ENCODE measurements at regions of chr1 and their contacts with region 1.

Region 1: DNA sequence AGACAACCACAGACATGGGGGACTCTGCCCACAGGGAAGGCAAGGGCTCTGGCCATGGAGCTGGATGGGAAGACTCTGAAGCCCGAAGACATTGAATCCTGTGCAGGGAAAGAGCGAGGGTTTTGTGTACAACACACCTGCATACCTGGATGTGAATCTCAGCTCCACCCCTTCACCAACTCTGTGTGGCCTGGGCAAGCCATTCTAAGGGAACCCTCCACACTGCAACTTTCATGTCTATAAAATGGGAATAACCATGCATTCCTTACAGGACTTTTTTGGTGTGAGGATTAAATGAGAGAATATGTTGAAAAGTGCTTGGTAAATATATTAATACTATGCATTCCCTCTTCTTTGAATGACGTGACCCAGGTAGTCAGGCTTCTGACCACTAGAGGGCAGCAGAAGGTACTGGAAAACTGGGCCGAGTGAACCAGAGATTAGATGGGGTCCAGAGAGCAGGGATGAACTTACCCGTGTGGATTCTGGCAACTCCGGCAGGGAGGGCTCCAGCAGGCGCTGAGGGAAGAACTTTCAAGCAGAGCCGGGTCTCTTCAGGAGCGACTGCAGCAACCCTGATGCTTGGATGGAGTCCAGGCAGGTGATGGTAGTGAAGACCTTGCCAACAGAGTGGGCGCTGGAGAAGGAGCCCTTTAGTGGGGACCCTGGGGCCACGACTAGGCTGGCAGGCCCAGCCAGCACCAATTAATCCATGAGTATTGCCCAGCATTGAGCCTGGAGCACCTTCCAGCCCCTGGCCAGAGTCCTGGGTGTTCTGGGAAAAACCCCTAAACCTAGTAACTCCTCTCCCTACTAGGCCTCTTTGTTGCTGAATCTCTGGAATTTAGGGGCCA is 834 bp upstream of the ELF3 start:
- DNase-seq: peak; percentile 90
- H3K4me3 ChIP-seq: peak overlapping the region in 1 of 2 donors; percentile 52
- H3K27ac ChIP-seq: peak overlapping the region; percentile 91
- H3K4me1 ChIP-seq: peaks cover 13% of the 10 kb centered on the region
- H3K27me3 ChIP-seq: no peaks in the 10 kb centered on the region
- CTCF ChIP-seq: peak; percentile 79 to 96 (median 96)
- POLR2A ChIP-seq: no peak

Region 2: GRCh38 chr1:201933840-201934430 is 75.6 kb before region 1 on chr1:
- intact Hi-C with region 1: no loop called
- DNase-seq: no peak
- H3K4me3 ChIP-seq: no peak overlapping the region
- H3K27ac ChIP-seq: no peak overlapping the region
- H3K4me1 ChIP-seq: no peaks in the 10 kb centered on the region
- H3K27me3 ChIP-seq: no peaks in the 10 kb centered on the region
- CTCF ChIP-seq: no peak
- POLR2A ChIP-seq: no peak

Region 3: DNA sequence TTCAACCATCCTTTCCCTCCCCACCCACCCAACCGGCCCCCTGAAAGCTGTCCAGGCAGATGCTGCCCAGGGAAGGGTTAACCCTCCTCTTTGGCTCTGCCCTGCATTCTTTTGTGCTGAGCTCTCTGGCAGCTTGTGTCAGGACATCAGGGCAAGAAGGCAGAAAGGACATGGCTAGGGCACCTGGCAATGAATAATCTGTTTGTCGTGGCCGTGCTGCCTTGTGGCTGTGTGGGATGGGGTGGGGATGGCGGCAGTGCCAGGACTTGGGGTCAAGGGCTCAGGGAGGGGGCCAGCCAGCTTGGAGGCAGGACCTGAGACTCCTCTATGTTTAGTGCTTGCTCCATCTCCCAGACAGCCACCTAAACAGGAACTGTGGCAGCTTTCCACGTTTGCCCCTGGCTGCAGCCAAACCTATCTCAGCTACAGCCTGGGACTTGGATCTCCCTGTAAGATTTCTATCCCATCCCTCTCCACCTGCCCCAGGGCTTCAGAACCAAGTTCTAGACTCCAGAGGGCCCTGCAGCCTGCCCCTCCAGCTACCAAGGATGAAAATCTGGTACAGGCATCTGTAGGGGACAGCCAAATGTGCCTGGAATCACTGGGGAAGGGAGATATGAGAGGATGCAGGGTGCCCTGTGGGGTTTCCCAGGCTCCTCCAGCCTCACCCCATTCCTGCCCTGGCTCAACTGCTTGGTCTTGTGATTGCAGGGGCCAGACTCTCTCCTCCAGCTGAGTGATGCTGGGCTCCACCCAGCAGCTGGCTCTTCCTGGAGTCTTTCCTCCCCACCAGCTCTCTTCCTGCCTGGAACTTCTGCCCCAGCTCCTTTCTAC is 103.5 kb after region 1 on chr1:
- intact Hi-C with region 1: loop called (anchors 10 kb)
- DNase-seq: no peak
- H3K4me3 ChIP-seq: no peak overlapping the region
- H3K27ac ChIP-seq: peak overlapping the region; percentile 22 to 62
- H3K4me1 ChIP-seq: peaks cover 5% of the 10 kb centered on the region
- H3K27me3 ChIP-seq: no peaks in the 10 kb centered on the region
- CTCF ChIP-seq: no peak
- POLR2A ChIP-seq: no peak

Region 4: GRCh38 chr1:202135221-202135721 is 125.7 kb after region 1 on chr1:
- intact Hi-C with region 1: loop called (anchors 1 kb)
- DNase-seq: peak; percentile 58
- H3K4me3 ChIP-seq: no peak overlapping the region
- H3K27ac ChIP-seq: peak overlapping the region; percentile 78 to 83
- H3K4me1 ChIP-seq: peaks cover 15% of the 10 kb centered on the region
- H3K27me3 ChIP-seq: no peaks in the 10 kb centered on the region
- CTCF ChIP-seq: peak; percentile 80 to 89 (median 83)
- POLR2A ChIP-seq: no peak

Region 5: GRCh38 chr1:202154766-202155477 is 145.4 kb after region 1 on chr1:
- intact Hi-C with region 1: no loop called
- DNase-seq: no peak
- H3K4me3 ChIP-seq: no peak overlapping the region
- H3K27ac ChIP-seq: no peak overlapping the region
- H3K4me1 ChIP-seq: no peaks in the 10 kb centered on the region
- H3K27me3 ChIP-seq: no peaks in the 10 kb centered on the region
- CTCF ChIP-seq: peak in 2 of 4 experiments; percentile 20 to 31
- POLR2A ChIP-seq: no peak

Region 6: DNA sequence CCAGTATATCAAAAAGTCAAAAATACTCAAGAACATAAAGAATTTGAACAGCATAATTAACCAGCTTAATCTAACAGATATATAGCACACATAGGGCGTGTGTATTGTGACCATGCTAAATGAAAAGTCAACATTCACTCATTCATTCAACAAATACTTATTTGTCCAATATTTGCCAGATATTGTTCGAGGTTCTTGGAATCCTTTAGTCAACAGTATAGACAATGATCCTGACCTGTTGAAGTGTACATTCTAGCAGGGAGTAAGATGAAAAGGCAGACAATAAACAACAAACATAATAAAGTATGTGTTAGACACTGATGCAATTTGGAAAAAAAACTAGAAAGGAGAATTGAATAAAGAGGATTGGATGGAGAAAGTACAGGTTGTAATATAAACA is 513.4 kb after region 1 on chr1:
- intact Hi-C with region 1: no loop called
- DNase-seq: no peak
- H3K4me3 ChIP-seq: no peak overlapping the region
- H3K27ac ChIP-seq: no peak overlapping the region
- H3K4me1 ChIP-seq: no peaks in the 10 kb centered on the region
- H3K27me3 ChIP-seq: no peaks in the 10 kb centered on the region
- CTCF ChIP-seq: no peak
- POLR2A ChIP-seq: no peak

Measured in prostate gland (tissue), 2 donors.